HEK293 (cell line): ENCODE measurements at regions of chr16 and their contacts with region 1.

Region 1: DNA sequence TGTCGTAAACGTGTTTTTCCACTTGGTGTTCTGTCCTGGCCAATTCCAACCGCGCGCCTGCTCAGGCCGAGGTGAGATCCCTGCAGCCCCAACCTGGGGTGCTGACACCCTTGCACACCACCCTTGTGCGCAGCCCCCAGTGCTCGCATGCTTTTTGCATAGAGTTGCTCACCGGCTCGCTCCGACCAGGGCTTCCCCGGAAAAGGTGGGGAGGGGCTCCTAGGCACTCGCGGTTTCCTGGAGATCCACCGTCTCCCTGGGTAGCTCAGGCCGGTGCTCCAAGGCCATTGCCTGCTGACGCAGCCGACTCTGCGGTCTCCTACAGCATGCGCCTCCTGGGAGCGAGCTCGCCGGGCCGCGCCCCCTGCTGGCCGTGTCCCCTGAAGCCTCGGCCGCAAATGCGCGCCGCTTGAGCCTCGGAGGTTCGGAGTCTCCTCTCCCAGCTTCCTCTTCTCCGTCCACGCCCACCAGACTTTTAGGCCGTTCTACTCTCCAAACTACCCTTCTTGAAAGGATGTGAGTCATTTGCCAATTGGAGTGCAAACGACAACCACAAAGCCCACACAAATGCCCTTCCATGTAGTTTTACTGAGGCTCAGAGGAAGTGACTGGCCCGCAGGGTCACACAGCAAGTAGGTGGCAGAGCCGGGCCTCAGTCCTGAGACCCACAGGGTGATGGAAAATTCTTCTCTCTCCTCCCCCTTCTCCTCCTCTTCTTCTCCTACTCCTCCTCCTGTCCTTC is 7.2 kb upstream of the PDP2 start:
- H3K4me3 ChIP-seq: peak overlapping the region; percentile 5; the same call in 1 of the 2 replicates
- H3K27ac ChIP-seq: no peak overlapping the region; the same call in 1 of the 2 replicates
- H3K4me1 ChIP-seq: no peaks in the 10 kb centered on the region
- CTCF ChIP-seq: peak; percentile 98

Region 2: GRCh38 chr16:66608241-66609138 is 264.6 kb before region 1 on chr16:
- CTCF ChIA-PET with region 1: interaction called, 13 read pairs
- POLR2A ChIA-PET with region 1: interaction called, 3 read pairs
- H3K4me3 ChIP-seq: no peak overlapping the region
- H3K27ac ChIP-seq: no peak overlapping the region
- H3K4me1 ChIP-seq: no peaks in the 10 kb centered on the region
- CTCF ChIP-seq: peak; percentile 93

Region 3: DNA sequence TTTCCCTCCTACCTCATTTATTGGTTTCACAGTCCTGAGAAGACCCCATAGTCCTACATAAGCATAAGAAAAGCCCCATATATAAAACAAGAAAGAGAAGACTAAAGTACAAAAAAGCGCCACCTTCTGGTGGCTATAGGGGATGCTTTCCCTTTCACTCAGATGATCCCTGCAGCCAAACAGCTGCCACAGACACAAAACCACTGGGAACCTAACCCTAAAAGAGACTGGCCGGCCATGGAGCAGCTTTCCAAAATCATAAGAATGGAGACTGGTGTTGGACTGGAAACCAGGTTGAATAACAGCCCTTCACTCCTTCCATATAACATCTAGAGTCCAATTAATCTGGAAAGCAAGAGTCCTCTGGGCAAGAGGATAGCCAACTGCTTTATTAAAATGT is 133.1 kb before region 1 on chr16:
- CTCF ChIA-PET with region 1: interaction called, 13 read pairs
- POLR2A ChIA-PET with region 1: no interaction called
- H3K4me3 ChIP-seq: no peak overlapping the region
- H3K27ac ChIP-seq: peak overlapping the region; percentile 38; the same call in 1 of the 2 replicates
- H3K4me1 ChIP-seq: peaks cover 14% of the 10 kb centered on the region
- CTCF ChIP-seq: 0 out of 2 replicates have a peak, but pooled peaks have one; percentile 15

Region 4: GRCh38 chr16:66774981-66775380 is 98.1 kb before region 1 on chr16:
- CTCF ChIA-PET with region 1: interaction called, 3 read pairs
- POLR2A ChIA-PET with region 1: interaction called, 17 read pairs
- H3K4me3 ChIP-seq: no peak overlapping the region
- H3K27ac ChIP-seq: no peak overlapping the region
- H3K4me1 ChIP-seq: no peaks in the 10 kb centered on the region
- CTCF ChIP-seq: no peak

Region 5: GRCh38 chr16:66830422-66831404 is 42.4 kb before region 1 on chr16 and contains the start of gene NAE1:
- CTCF ChIA-PET with region 1: interaction called, 74 read pairs
- POLR2A ChIA-PET with region 1: interaction called, 20 read pairs
- H3K4me3 ChIP-seq: peak within 1 kb of the TSS; percentile 75
- H3K27ac ChIP-seq: peak within 1 kb of the TSS; percentile 88
- H3K4me1 ChIP-seq: peaks cover 5% of the 10 kb centered on the region; the same call in 1 of the 2 replicates
- CTCF ChIP-seq: peak; percentile 99

Region 6: DNA sequence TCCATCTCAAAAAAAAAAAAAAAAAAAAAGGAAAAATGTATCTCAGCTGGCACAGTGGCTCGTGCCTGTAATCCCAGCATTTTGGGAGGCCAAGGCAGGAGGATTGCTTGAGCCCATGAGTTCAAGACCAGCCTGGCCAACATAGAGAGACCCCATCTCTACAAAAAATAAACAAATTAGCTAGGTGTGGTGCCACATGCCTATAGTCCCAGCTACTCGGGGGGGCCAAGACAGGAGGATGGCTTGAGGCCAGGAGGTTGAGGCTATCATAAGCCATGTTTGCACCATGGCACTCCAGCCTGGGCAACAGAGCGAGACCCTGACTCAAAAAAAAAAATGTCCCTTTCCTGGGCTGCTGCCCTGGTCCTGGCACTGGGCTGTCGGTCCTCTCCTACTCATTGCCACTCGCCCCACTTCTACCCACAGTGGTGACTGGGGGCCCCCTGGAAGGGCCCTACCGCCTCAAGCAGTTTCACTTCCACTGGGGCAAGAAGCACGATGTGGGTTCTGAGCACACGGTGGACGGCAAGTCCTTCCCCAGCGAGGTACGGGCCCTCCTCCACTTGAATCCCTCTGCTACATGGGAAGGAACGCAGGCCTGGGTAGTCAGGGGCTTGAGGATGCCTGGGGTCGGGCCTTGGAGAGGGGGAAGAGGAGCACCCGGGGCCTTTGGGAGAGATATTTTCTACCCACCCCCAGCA is 22.8 kb before region 1 on chr16:
- CTCF ChIA-PET with region 1: interaction called, 19 read pairs
- POLR2A ChIA-PET with region 1: no interaction called
- H3K4me3 ChIP-seq: no peak overlapping the region
- H3K27ac ChIP-seq: no peak overlapping the region
- H3K4me1 ChIP-seq: no peaks in the 10 kb centered on the region
- CTCF ChIP-seq: no peak

Region 7: GRCh38 chr16:66934153-66934838 is 61.2 kb after region 1 on chr16 and contains the start of gene CIAO2B:
- CTCF ChIA-PET with region 1: interaction called, 6 read pairs
- POLR2A ChIA-PET with region 1: interaction called, 10 read pairs
- H3K4me3 ChIP-seq: peak within 1 kb of the TSS; percentile 83
- H3K27ac ChIP-seq: peak within 1 kb of the TSS; percentile 72
- H3K4me1 ChIP-seq: peaks cover 2% of the 10 kb centered on the region; the same call in 1 of the 2 replicates
- CTCF ChIP-seq: no peak

Region 8: GRCh38 chr16:67356396-67356795 is 483.3 kb after region 1 on chr16:
- CTCF ChIA-PET with region 1: no interaction called
- POLR2A ChIA-PET with region 1: no interaction called
- H3K4me3 ChIP-seq: no peak overlapping the region
- H3K27ac ChIP-seq: no peak overlapping the region
- H3K4me1 ChIP-seq: no peaks in the 10 kb centered on the region
- CTCF ChIP-seq: no peak